CD8-positive, alpha-beta T cell (primary cell): ENCODE measurements at regions of chr6 and their contacts with region 1.

Region 1: GRCh38 chr6:169831450-169832246 is 80.2 kb downstream of the ERMARD start:
- DNase-seq: peak; percentile 40 to 83 (median 74)
- ATAC-seq: peak; percentile 63
- H3K4me3 ChIP-seq: no peak overlapping the region
- H3K4me3 Mint-ChIP-seq: no peak overlapping the region
- H3K27ac ChIP-seq: no peak overlapping the region
- H3K27ac Mint-ChIP-seq: no peak overlapping the region
- H3K4me1 ChIP-seq: no peaks in the 10 kb centered on the region
- H3K4me1 Mint-ChIP-seq: peaks cover 2% of the 10 kb centered on the region
- H3K27me3 ChIP-seq: peaks cover 0 to 11% of the 10 kb centered on the region in 2 experiments
- H3K27me3 Mint-ChIP-seq: peaks cover 44% of the 10 kb centered on the region
- CTCF ChIP-seq: peak; percentile 96

Region 2: DNA sequence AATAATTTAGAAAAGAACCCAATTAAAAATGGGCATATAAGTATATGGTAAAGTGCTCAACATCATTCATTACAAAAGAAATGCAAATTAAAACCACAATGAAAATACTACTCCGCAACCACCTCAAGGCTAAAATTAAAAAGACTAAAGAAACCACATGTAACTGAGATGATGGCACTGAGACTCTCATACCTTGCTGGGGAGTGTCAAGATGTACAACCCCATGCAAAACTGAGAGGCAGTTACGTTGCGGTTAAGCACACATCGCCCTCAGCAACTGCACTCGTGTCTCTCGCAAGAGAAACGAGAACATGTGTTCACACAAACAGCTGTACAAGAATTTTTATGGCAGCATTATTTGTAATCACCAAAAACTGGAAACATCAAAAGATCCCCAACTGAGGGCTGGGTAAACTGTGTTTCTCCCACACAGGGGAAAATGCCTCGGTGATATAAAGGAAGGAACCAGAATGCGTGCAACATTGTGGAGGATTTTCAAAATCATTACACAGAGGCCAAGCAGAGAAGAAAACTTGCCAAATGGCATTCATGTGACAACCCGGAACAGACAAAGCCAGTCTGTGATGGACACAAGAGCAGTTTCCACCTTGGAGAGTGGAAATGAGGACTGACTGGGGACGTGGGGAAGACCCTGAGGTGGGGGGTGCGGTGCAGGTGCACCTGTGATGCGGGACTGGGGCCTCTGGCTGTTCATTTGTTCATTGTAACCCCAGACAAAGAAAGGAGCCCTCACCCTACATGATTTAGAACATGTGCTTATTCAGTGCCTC is 274.7 kb before region 1 on chr6:
- CTCF ChIA-PET with region 1: no interaction called
- POLR2A ChIA-PET with region 1: no interaction called
- intact Hi-C with region 1: no loop called
- DNase-seq: peak in 4 of 9 experiments; percentile 15 to 73 (median 58)
- ATAC-seq: peak; percentile 97
- H3K4me3 ChIP-seq: no peak overlapping the region
- H3K4me3 Mint-ChIP-seq: peak overlapping the region; percentile 48
- H3K27ac ChIP-seq: no peak overlapping the region
- H3K27ac Mint-ChIP-seq: no peak overlapping the region
- H3K4me1 ChIP-seq: peaks cover 18% of the 10 kb centered on the region
- H3K4me1 Mint-ChIP-seq: peaks cover 16% of the 10 kb centered on the region
- H3K27me3 ChIP-seq: no peaks in the 10 kb centered on the region
- H3K27me3 Mint-ChIP-seq: peaks cover 13% of the 10 kb centered on the region
- CTCF ChIP-seq: no peak

Region 3: GRCh38 chr6:169803271-169803811 is 28.3 kb before region 1 on chr6:
- CTCF ChIA-PET with region 1: interaction called, 17 read pairs
- POLR2A ChIA-PET with region 1: no interaction called
- intact Hi-C with region 1: no loop called
- DNase-seq: peak in 2 of 9 experiments; percentile 37 to 53
- ATAC-seq: peak; percentile 8
- H3K4me3 ChIP-seq: no peak overlapping the region
- H3K4me3 Mint-ChIP-seq: peak overlapping the region; percentile 2
- H3K27ac ChIP-seq: no peak overlapping the region
- H3K27ac Mint-ChIP-seq: no peak overlapping the region
- H3K4me1 ChIP-seq: peaks cover 54% of the 10 kb centered on the region
- H3K4me1 Mint-ChIP-seq: peaks cover 51% of the 10 kb centered on the region
- H3K27me3 ChIP-seq: peaks cover 0 to 4% of the 10 kb centered on the region in 2 experiments
- H3K27me3 Mint-ChIP-seq: peaks cover 38% of the 10 kb centered on the region
- CTCF ChIP-seq: no peak

Region 4: GRCh38 chr6:169845426-169846285 is 14.0 kb after region 1 on chr6:
- CTCF ChIA-PET with region 1: interaction called, 21 read pairs
- POLR2A ChIA-PET with region 1: no interaction called
- intact Hi-C with region 1: no loop called
- DNase-seq: peak in 1 of 9 experiments; percentile 32
- ATAC-seq: no peak
- H3K4me3 ChIP-seq: no peak overlapping the region
- H3K4me3 Mint-ChIP-seq: no peak overlapping the region
- H3K27ac ChIP-seq: no peak overlapping the region
- H3K27ac Mint-ChIP-seq: no peak overlapping the region
- H3K4me1 ChIP-seq: no peaks in the 10 kb centered on the region
- H3K4me1 Mint-ChIP-seq: no peaks in the 10 kb centered on the region
- H3K27me3 ChIP-seq: no peaks in the 10 kb centered on the region
- H3K27me3 Mint-ChIP-seq: peaks cover 2% of the 10 kb centered on the region
- CTCF ChIP-seq: no peak

Region 5: GRCh38 chr6:169890049-169890448 is 58.4 kb after region 1 on chr6:
- CTCF ChIA-PET with region 1: no interaction called
- POLR2A ChIA-PET with region 1: no interaction called
- intact Hi-C with region 1: no loop called
- DNase-seq: peak in 1 of 9 experiments; percentile 32
- ATAC-seq: no peak
- H3K4me3 ChIP-seq: no peak overlapping the region
- H3K4me3 Mint-ChIP-seq: no peak overlapping the region
- H3K27ac ChIP-seq: no peak overlapping the region
- H3K27ac Mint-ChIP-seq: no peak overlapping the region
- H3K4me1 ChIP-seq: no peaks in the 10 kb centered on the region
- H3K4me1 Mint-ChIP-seq: no peaks in the 10 kb centered on the region
- H3K27me3 ChIP-seq: no peaks in the 10 kb centered on the region
- H3K27me3 Mint-ChIP-seq: peaks cover 18% of the 10 kb centered on the region
- CTCF ChIP-seq: no peak

Region 6: DNA sequence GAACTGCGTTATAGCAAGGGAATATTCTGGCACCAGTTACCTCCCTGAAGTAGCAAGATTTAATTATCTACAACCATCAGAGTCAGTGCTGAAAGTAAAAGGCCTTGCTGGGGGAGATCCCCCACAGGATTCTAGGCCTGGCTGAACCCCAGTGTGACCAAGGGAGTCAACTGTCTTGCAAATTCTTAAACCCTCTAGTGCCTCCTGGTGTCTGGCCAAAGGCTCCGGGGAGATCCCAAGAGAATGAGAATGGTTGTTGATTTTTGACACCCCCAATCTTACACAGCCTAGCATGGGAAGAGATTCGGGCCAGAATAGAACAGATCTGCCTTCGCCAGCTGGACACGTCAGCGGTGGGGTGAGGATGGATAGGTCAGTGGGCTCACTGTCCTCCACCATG is 99.2 kb after region 1 on chr6:
- CTCF ChIA-PET with region 1: interaction called, 37 read pairs
- POLR2A ChIA-PET with region 1: no interaction called
- intact Hi-C with region 1: loop called (anchors 1 to 2 kb)
- DNase-seq: peak in 3 of 9 experiments; percentile 31 to 45 (median 44)
- ATAC-seq: no peak
- H3K4me3 ChIP-seq: no peak overlapping the region
- H3K4me3 Mint-ChIP-seq: no peak overlapping the region
- H3K27ac ChIP-seq: no peak overlapping the region
- H3K27ac Mint-ChIP-seq: no peak overlapping the region
- H3K4me1 ChIP-seq: no peaks in the 10 kb centered on the region
- H3K4me1 Mint-ChIP-seq: no peaks in the 10 kb centered on the region
- H3K27me3 ChIP-seq: no peaks in the 10 kb centered on the region
- H3K27me3 Mint-ChIP-seq: peaks cover 14% of the 10 kb centered on the region
- CTCF ChIP-seq: peak; percentile 22

Region 7: GRCh38 chr6:169990095-169991030 is 158.7 kb after region 1 on chr6:
- CTCF ChIA-PET with region 1: interaction called, 5 read pairs
- POLR2A ChIA-PET with region 1: no interaction called
- intact Hi-C with region 1: loop called in 1 of 2 experiments (anchors 10 kb)
- DNase-seq: peak in 7 of 9 experiments; percentile 18 to 76 (median 35)
- ATAC-seq: peak; percentile 93
- H3K4me3 ChIP-seq: no peak overlapping the region
- H3K4me3 Mint-ChIP-seq: peak overlapping the region; percentile 76
- H3K27ac ChIP-seq: no peak overlapping the region
- H3K27ac Mint-ChIP-seq: peak overlapping the region; percentile 90
- H3K4me1 ChIP-seq: peaks cover 28% of the 10 kb centered on the region
- H3K4me1 Mint-ChIP-seq: peaks cover 29% of the 10 kb centered on the region
- H3K27me3 ChIP-seq: no peaks in the 10 kb centered on the region
- H3K27me3 Mint-ChIP-seq: no peaks in the 10 kb centered on the region
- CTCF ChIP-seq: no peak

Region 8: GRCh38 chr6:170516783-170517616 is 685.4 kb after region 1 on chr6:
- CTCF ChIA-PET with region 1: interaction called, 34 read pairs
- POLR2A ChIA-PET with region 1: no interaction called
- intact Hi-C with region 1: loop called (anchors 1 kb)
- DNase-seq: peak in 8 of 9 experiments; percentile 11 to 71 (median 35)
- ATAC-seq: peak; percentile 89
- H3K4me3 ChIP-seq: no peak overlapping the region
- H3K4me3 Mint-ChIP-seq: peak overlapping the region; percentile 58
- H3K27ac ChIP-seq: no peak overlapping the region
- H3K27ac Mint-ChIP-seq: no peak overlapping the region
- H3K4me1 ChIP-seq: no peaks in the 10 kb centered on the region
- H3K4me1 Mint-ChIP-seq: peaks cover 2% of the 10 kb centered on the region
- H3K27me3 ChIP-seq: no peaks in the 10 kb centered on the region
- H3K27me3 Mint-ChIP-seq: peaks cover 31% of the 10 kb centered on the region
- CTCF ChIP-seq: peak; percentile 87